ENCODE measurements at regions of chrX and their contacts with region 1.

Region 1: GRCh38 chrX:21770631-21771321 is 12.9 kb upstream of the SMPX start:
- H3K4me3 ChIP-seq: peak overlapping the region; percentile 5; the same call in 1 of the 2 replicates
- H3K27ac ChIP-seq: peak overlapping the region; percentile 61
- H3K4me1 ChIP-seq: 0 out of 2 replicates have a peak, but pooled peaks cover 2% of the 10 kb centered on the region
- CTCF ChIP-seq: no peak

Region 2: GRCh38 chrX:21756785-21757529 is 13.8 kb before region 1 on chrX:
- CTCF ChIA-PET with region 1: interaction called, 10 read pairs
- POLR2A ChIA-PET with region 1: no interaction called
- H3K4me3 ChIP-seq: no peak overlapping the region
- H3K27ac ChIP-seq: no peak overlapping the region
- H3K4me1 ChIP-seq: no peaks in the 10 kb centered on the region
- CTCF ChIP-seq: no peak

Measured in HEK293 (cell line).